ENCODE measurements at regions of chr22 and their contacts with region 1.

Region 1: DNA sequence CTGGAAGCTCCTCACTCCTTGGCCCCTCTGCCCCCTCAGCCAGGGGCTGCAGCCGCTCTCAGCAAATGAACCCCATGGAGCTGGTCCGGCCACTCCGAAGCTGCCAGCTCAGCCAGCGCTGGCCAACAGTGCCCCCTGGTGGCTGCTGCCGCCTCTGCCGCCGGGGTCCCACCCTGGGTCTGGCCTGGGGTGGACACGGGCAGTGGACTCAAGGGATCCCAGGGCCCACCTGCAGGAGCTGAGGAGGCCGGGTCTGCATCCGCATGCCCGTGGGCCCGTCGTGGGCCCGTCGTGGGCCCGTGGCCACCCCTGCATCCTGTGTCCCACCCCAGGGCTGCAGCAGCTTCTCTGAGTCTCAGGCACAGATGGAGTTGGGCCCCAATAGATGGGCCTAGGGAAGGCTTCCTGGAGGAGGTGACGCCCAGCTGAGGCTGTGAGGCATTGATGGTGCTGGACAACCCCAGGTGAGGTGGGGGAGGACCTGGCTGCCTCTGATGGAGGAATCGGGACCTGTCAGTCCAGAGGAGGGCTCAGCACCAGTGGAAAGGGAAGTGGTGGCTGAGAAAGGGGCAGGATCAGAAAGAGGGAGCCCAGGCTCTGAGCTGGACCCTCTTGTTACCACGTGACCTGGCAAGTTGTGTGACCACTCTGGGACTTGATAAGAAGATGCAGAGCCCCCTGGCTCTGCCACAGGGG is 522.3 kb downstream of the BRD1 start:
- DNase-seq: peak; percentile 44 to 90 (median 56)
- ATAC-seq: peak; percentile 92
- H3K4me3 ChIP-seq: no peak overlapping the region
- H3K27ac ChIP-seq: no peak overlapping the region
- H3K4me1 ChIP-seq: no peaks in the 10 kb centered on the region
- H3K27me3 ChIP-seq: peaks cover 0 to 78% of the 10 kb centered on the region in 2 donors
- CTCF ChIP-seq: peak; percentile 90 to 93

Region 2: DNA sequence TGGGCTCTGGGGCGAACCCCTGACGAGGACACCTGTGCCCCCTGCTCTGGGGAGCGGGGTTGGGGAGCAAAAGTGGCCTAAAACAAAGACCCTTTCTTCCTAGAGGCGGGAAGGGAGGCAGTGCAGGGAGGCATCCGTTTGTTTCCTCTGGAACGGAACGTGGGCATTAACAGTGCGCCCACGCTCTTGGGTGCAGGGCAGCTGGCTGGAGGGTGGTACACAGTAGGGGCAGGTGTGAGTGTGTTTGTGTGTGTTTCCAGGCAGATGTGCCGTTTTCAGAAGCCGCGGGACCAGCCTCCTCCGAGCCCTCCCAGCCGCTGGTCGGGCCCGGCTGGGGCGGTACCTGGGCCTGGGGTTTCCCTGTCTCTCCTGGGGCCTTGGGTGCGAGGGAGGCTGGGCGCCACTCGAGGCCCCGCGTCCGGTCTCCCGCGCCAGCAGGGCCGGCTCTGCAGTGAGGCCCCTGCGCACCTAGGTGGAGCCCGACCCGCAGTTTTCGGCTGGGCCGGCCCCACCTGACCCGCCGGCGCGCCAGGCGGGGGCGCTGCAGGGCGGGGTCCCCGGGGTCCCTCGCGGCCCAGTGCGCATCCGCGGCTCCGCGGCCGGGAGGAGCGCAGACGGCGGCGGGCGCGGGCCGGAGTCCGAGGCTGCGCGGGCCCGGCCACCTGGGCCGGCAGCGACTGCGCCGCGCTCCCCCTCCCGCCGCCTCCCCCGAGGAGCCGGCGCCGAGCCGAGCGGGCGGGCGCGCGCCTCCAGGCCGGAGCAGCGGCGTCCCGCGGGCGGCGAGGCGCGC is 730.4 kb before region 1 on chr22:
- intact Hi-C with region 1: loop called in 1 of 2 experiments (anchors 10 kb)
- DNase-seq: peak in 3 of 4 donors; percentile 23 to 83 (median 65)
- ATAC-seq: peak; percentile 92
- H3K4me3 ChIP-seq: no peak overlapping the region
- H3K27ac ChIP-seq: no peak overlapping the region
- H3K4me1 ChIP-seq: peaks cover 0 to 9% of the 10 kb centered on the region in 2 donors
- H3K27me3 ChIP-seq: peaks cover 15 to 65% of the 10 kb centered on the region in 2 donors
- CTCF ChIP-seq: peak; percentile 16 to 29

Region 3: GRCh38 chr22:49502126-49502826 is 196.9 kb after region 1 on chr22:
- intact Hi-C with region 1: no loop called
- DNase-seq: no peak
- ATAC-seq: no peak
- H3K4me3 ChIP-seq: no peak overlapping the region
- H3K27ac ChIP-seq: no peak overlapping the region
- H3K4me1 ChIP-seq: no peaks in the 10 kb centered on the region
- H3K27me3 ChIP-seq: no peaks in the 10 kb centered on the region
- CTCF ChIP-seq: no peak